A673 (cell line): ENCODE measurements at regions of chr7 and their contacts with region 1.

Region 1: DNA sequence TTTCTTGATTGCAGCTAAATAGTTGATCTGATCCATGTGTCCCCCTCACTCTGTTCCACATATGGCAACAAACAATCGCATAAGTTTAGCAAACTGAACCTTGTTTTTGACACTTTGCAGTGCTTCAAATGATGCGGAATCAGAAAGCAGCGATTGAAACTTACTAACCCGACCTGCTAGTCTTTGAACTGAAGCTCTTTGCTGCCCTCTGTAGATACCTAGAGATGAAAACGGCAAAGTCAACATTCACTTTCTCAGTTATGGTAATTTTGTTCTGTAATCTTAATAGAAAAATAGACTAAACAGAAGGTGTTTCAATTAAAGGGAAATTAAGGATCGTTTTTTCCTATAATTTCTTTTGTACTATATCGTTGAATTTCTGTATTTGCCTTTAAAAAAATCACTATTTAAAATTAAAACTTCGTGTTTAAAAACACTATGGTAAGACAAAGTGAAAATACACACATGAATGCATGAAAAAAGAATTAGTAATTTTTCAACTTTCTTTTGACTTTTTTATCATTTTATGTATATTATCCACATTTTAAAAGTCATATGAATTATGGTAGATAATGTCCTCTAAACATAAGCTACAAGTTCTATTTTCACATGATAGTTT is 276.5 kb downstream of the MAGI2 start:
- DNase-seq: peak; percentile 71
- H3K4me3 ChIP-seq: no peak overlapping the region
- H3K27ac ChIP-seq: no peak overlapping the region
- H3K4me1 ChIP-seq: no peaks in the 10 kb centered on the region
- H3K27me3 ChIP-seq: no peaks in the 10 kb centered on the region
- CTCF ChIP-seq: peak; percentile 73

Region 2: GRCh38 chr7:78924581-78924980 is 252.4 kb before region 1 on chr7:
- CTCF ChIA-PET with region 1: no interaction called
- POLR2A ChIA-PET with region 1: no interaction called
- intact Hi-C with region 1: loop called (anchors 5 kb)
- DNase-seq: peak; percentile 40
- H3K4me3 ChIP-seq: no peak overlapping the region
- H3K27ac ChIP-seq: no peak overlapping the region
- H3K4me1 ChIP-seq: no peaks in the 10 kb centered on the region
- H3K27me3 ChIP-seq: peaks cover 5% of the 10 kb centered on the region
- CTCF ChIP-seq: peak; percentile 49